ENCODE measurements at regions of chr4 and their contacts with region 1.

Region 1: DNA sequence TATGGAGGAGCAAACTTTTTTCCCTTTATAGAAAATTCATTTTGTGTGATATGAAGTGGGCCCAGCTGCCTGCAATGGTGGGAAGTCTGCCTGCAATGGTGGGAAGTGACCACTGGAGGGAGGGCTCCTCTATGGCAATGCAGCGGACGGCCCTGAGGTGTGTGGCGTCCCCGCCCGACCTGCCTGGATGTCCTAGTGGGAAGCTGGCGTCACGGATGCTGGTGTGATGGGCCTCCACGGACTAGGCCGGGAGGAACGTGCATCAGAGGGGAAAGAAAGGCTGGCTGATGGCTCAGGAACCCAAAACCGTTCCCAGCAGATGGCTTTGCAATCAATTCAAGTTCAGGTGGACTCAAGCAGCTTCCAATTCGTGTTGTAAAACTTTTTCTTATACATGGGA is 177.9 kb downstream of the AFAP1 start:
- DNase-seq: no peak
- ATAC-seq: peak; percentile 96
- H3K4me3 ChIP-seq: no peak overlapping the region
- H3K27ac ChIP-seq: no peak overlapping the region
- H3K4me1 ChIP-seq: peaks cover 4% of the 10 kb centered on the region; the same call in 1 of the 2 replicates
- H3K27me3 ChIP-seq: peaks cover 0 to 2% of the 10 kb centered on the region in 2 experiments; a peak in 2 of 4 replicates
- CTCF ChIP-seq: peak; percentile 66 to 85 (median 84)
- EP300 ChIP-seq: no peak
- POLR2A ChIP-seq: no peak
- RAD21 ChIP-seq: peak; percentile 82

Region 2: GRCh38 chr4:7663075-7663541 is 98.6 kb before region 1 on chr4:
- CTCF ChIA-PET with region 1: no interaction called
- POLR2A ChIA-PET with region 1: no interaction called
- RAD21 ChIA-PET with region 1: no interaction called
- SMC1A ChIA-PET with region 1: no interaction called
- in situ Hi-C with region 1: no loop called
- intact Hi-C with region 1: no loop called
- DNase-seq: no peak
- ATAC-seq: no peak
- H3K4me3 ChIP-seq: no peak overlapping the region
- H3K27ac ChIP-seq: no peak overlapping the region
- H3K4me1 ChIP-seq: no peaks in the 10 kb centered on the region
- H3K27me3 ChIP-seq: no peaks in the 10 kb centered on the region
- CTCF ChIP-seq: no peak
- EP300 ChIP-seq: no peak
- POLR2A ChIP-seq: no peak
- RAD21 ChIP-seq: no peak

Region 3: DNA sequence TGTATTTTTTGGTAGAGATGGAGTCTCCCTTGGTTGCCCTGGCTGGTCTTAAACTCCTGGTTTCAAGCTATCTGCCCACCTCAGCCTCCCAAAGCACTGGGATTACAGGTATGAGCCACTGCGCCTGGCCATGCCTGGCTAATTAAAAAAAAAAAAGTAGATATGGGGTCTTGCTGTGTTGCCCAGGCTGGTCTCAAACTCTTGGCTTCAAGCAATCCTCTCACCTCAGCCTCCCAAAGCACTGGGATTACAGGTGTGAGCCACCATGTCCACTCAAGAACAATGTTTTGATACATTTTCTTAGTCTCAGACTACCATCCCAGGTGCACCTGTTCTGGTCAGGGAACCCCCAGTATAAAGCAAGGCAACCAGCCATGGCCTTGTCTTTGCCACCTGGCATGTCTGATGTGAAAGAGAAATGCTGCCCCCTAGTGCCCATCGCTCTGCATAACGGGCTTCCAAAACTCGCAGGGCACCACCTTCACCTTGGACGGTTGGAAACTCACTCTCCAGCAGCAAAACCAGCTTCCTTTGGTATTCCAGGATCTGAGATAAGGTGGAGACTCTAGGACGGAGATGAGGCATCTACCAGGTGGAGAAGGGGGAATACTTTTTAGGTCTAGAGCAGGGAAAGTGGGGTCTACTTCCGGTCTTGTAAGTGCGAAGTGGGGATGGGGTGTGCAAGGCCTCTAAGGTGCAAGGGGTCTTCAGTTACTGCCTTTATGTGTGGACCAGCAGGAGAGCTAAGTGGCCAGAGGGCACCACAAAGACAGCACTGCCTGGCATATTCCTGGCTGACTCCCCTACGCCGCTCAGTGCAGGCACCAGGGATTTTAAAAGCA is 225.6 kb after region 1 on chr4:
- CTCF ChIA-PET with region 1: interaction called, 6 read pairs
- POLR2A ChIA-PET with region 1: no interaction called
- RAD21 ChIA-PET with region 1: no interaction called
- SMC1A ChIA-PET with region 1: no interaction called
- in situ Hi-C with region 1: no loop called
- intact Hi-C with region 1: loop called (anchors 5 kb)
- DNase-seq: peak; percentile 23
- ATAC-seq: peak; percentile 91
- H3K4me3 ChIP-seq: no peak overlapping the region
- H3K27ac ChIP-seq: no peak overlapping the region
- H3K4me1 ChIP-seq: no peaks in the 10 kb centered on the region
- H3K27me3 ChIP-seq: no peaks in the 10 kb centered on the region; a peak in 1 of 4 replicates
- CTCF ChIP-seq: peak; percentile 81 to 86 (median 84)
- EP300 ChIP-seq: no peak
- POLR2A ChIP-seq: no peak
- RAD21 ChIP-seq: peak; percentile 94